ENCODE measurements at regions of chr17 and their contacts with region 1.

Region 1: GRCh38 chr17:58658804-58659713 is 32.8 kb downstream of the TEX14 start:
- DNase-seq: peak; percentile 95
- ATAC-seq: peak; percentile 78
- H3K4me3 ChIP-seq: peak overlapping the region; percentile 44 to 82 (median 54)
- H3K4me3 Mint-ChIP-seq: peak overlapping the region; percentile 92
- H3K27ac ChIP-seq: peak overlapping the region; percentile 91 to 97
- H3K27ac Mint-ChIP-seq: peak overlapping the region; percentile 99
- H3K4me1 ChIP-seq: peaks cover 0 to 13% of the 10 kb centered on the region in 2 donors
- H3K4me1 Mint-ChIP-seq: peaks cover 15% of the 10 kb centered on the region
- H3K27me3 ChIP-seq: no peaks in the 10 kb centered on the region
- H3K27me3 Mint-ChIP-seq: no peaks in the 10 kb centered on the region
- CTCF ChIP-seq: no peak

Region 2: GRCh38 chr17:58541249-58541648 is 117.8 kb before region 1 on chr17:
- CTCF ChIA-PET with region 1: no interaction called
- POLR2A ChIA-PET with region 1: no interaction called
- intact Hi-C with region 1: no loop called
- DNase-seq: no peak
- ATAC-seq: no peak
- H3K4me3 ChIP-seq: no peak overlapping the region
- H3K4me3 Mint-ChIP-seq: no peak overlapping the region
- H3K27ac ChIP-seq: no peak overlapping the region
- H3K27ac Mint-ChIP-seq: no peak overlapping the region
- H3K4me1 ChIP-seq: no peaks in the 10 kb centered on the region
- H3K4me1 Mint-ChIP-seq: no peaks in the 10 kb centered on the region
- H3K27me3 ChIP-seq: peaks cover 0 to 11% (median 0%) of the 10 kb centered on the region in 4 experiments
- H3K27me3 Mint-ChIP-seq: peaks cover 18% of the 10 kb centered on the region
- CTCF ChIP-seq: peak; percentile 24

Region 3: DNA sequence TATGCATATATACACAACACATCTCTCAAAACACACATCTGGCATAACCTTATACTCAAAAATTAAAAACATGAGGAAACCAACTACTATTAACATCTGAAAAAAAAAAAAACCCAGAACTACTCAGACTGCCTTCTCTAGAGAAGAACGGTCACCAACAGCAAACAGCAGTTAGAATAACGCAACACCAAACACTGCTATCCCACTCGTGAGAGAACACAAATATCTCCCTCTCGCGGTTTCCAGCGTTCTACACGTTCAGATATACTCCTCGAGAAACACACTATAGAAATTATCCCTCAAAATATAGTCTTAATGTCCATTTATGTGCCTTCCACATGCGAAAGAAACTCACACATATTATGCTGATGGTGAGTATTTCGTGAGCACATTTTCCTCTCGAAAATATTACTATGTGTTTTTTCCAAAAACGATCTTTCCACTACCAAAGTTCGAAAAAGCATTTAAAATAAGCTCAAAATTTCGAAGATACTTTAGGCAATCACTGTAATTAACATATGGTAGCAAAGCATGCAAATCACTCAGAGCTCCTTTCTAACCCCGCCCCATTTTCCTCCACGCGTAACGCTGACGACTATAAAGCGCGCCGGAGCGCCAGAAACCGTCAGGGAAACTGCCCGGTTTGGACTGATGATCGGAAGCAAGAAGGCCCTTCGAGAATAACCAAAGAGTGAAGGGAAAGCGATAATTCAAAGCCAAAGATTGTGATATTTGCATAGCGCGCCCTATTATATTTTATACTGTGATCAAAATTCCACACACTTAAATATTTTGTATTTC is 27.3 kb before region 1 on chr17:
- CTCF ChIA-PET with region 1: interaction called, 5 read pairs
- POLR2A ChIA-PET with region 1: interaction called, 40 read pairs
- intact Hi-C with region 1: loop called (anchors 1 kb)
- DNase-seq: peak; percentile 97
- ATAC-seq: peak; percentile 82
- H3K4me3 ChIP-seq: peak overlapping the region; percentile 28 to 84 (median 57)
- H3K4me3 Mint-ChIP-seq: no peak overlapping the region
- H3K27ac ChIP-seq: peak overlapping the region; percentile 81 to 99
- H3K27ac Mint-ChIP-seq: no peak overlapping the region
- H3K4me1 ChIP-seq: peaks cover 9% of the 10 kb centered on the region in 2 donors
- H3K4me1 Mint-ChIP-seq: peaks cover 12% of the 10 kb centered on the region
- H3K27me3 ChIP-seq: no peaks in the 10 kb centered on the region
- H3K27me3 Mint-ChIP-seq: no peaks in the 10 kb centered on the region
- CTCF ChIP-seq: peak; percentile 43

Region 4: DNA sequence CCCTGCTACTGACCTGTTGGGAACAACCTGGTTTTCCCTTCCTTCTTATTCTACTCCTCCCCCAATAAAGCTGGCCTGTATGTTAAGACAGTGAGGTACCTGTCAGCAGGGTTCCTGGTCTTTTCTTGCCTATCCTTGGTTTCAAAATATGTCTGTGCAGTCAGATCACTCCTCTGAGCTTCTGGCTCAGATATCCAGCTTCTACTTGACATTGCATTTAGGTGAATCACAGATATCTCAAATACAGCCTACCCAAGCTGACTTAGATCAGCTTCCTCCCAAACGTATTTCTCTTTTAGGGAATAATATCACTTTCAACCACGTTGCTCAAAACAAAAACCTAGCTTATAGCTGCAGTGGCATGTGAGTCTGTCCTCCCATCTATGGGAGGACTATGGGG is 15.9 kb before region 1 on chr17:
- CTCF ChIA-PET with region 1: interaction called, 3 read pairs
- POLR2A ChIA-PET with region 1: interaction called, 14 read pairs
- intact Hi-C with region 1: no loop called
- DNase-seq: no peak
- ATAC-seq: no peak
- H3K4me3 ChIP-seq: no peak overlapping the region
- H3K4me3 Mint-ChIP-seq: no peak overlapping the region
- H3K27ac ChIP-seq: no peak overlapping the region
- H3K27ac Mint-ChIP-seq: no peak overlapping the region
- H3K4me1 ChIP-seq: no peaks in the 10 kb centered on the region
- H3K4me1 Mint-ChIP-seq: no peaks in the 10 kb centered on the region
- H3K27me3 ChIP-seq: no peaks in the 10 kb centered on the region
- H3K27me3 Mint-ChIP-seq: no peaks in the 10 kb centered on the region
- CTCF ChIP-seq: no peak

Region 5: DNA sequence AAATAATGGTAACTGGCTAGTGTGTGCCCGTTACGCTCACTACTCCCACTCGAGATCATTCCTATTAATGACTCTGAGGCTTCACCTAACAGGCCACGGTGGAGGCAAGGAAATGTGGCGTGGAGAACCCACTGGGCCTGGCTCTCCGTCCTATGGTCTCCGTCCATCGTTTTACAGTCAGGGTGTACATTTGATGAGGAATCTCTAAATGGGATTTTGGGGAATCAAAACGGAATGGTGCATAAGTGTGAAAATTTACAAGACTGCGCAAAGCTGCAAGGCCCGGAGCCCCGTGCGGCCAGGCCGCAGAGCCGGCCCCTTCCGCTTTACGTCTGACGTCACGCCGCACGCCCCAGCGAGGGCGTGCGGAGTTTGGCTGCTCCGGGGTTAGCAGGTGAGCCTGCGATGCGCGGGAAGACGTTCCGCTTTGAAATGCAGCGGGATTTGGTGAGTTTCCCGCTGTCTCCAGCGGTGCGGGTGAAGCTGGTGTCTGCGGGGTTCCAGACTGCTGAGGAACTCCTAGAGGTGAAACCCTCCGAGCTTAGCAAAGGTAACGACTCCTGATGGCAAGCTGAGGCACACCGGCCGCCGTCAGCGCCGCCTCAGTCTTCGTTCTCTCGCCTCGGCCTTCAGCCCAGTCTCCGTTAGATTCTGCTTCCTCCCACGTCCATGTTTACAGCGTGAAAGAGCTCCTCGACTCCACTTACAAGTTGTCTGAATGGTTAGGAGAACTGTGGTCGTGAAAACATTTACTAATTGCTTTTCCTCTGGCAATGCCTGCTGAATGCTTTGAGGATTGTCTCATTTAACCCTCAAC is 33.4 kb after region 1 on chr17 and contains the start of gene RAD51C:
- CTCF ChIA-PET with region 1: interaction called, 3 read pairs
- POLR2A ChIA-PET with region 1: interaction called, 5 read pairs
- intact Hi-C with region 1: loop called (anchors 1 kb)
- DNase-seq: peak; percentile 92
- ATAC-seq: peak; percentile 99
- H3K4me3 ChIP-seq: peak within 1 kb of the TSS; percentile 64 to 88 (median 81)
- H3K4me3 Mint-ChIP-seq: peak within 1 kb of the TSS; percentile 90
- H3K27ac ChIP-seq: peak within 1 kb of the TSS; percentile 66 to 70
- H3K27ac Mint-ChIP-seq: peak within 1 kb of the TSS; percentile 95
- H3K4me1 ChIP-seq: peaks cover 14 to 17% of the 10 kb centered on the region in 2 donors
- H3K4me1 Mint-ChIP-seq: peaks cover 24% of the 10 kb centered on the region
- H3K27me3 ChIP-seq: no peaks in the 10 kb centered on the region
- H3K27me3 Mint-ChIP-seq: no peaks in the 10 kb centered on the region
- CTCF ChIP-seq: no peak
- total RNA-seq, gene RAD51C: 33.2 and 35.0 TPM in 2 replicates

Region 6: GRCh38 chr17:58764373-58764772 is 105.3 kb after region 1 on chr17:
- CTCF ChIA-PET with region 1: no interaction called
- POLR2A ChIA-PET with region 1: no interaction called
- intact Hi-C with region 1: no loop called
- DNase-seq: no peak
- ATAC-seq: no peak
- H3K4me3 ChIP-seq: no peak overlapping the region
- H3K4me3 Mint-ChIP-seq: no peak overlapping the region
- H3K27ac ChIP-seq: no peak overlapping the region
- H3K27ac Mint-ChIP-seq: no peak overlapping the region
- H3K4me1 ChIP-seq: no peaks in the 10 kb centered on the region
- H3K4me1 Mint-ChIP-seq: no peaks in the 10 kb centered on the region
- H3K27me3 ChIP-seq: peaks cover 0 to 16% (median 4%) of the 10 kb centered on the region in 4 experiments
- H3K27me3 Mint-ChIP-seq: peaks cover 24% of the 10 kb centered on the region
- CTCF ChIP-seq: no peak